ENCODE measurements at regions of chr6 and their contacts with region 1.

Region 1: DNA sequence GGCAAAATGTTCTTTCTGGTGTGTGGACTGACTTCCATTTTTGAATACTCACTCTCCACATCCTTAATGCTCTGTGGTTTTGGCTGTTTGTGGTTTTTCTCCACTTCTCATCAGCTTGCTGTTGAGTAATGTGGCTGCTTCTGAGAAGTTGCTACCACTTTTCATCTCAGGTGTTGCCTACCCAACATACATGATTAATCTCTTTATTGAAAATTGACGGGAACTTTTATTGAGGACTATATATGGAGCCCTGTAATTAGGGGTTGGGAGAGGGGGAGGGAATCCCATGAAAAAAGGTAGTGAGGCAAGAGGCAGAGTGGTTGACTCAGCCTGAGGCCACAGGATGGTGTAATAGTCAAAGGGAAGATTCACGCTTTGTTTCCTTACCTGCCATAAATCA is 17.6 kb downstream of the IL22RA2 start:
- DNase-seq: peak; percentile 59 to 77 (median 70)
- H3K4me3 ChIP-seq: peak overlapping the region in 1 of 2 donors; percentile 15
- H3K4me3 Mint-ChIP-seq: peak overlapping the region in 7 of 8 donors; percentile 6 to 85 (median 60)
- H3K27ac ChIP-seq: no peak overlapping the region
- H3K27ac Mint-ChIP-seq: peak overlapping the region in 6 of 7 donors; percentile 0 to 82 (median 53)
- H3K4me1 ChIP-seq: peaks cover 19% of the 10 kb centered on the region
- H3K4me1 Mint-ChIP-seq: peaks cover 11 to 38% (median 18%) of the 10 kb centered on the region in 4 donors
- H3K27me3 ChIP-seq: no peaks in the 10 kb centered on the region
- H3K27me3 Mint-ChIP-seq: peaks cover 0 to 3% of the 10 kb centered on the region in 2 donors

Region 2: DNA sequence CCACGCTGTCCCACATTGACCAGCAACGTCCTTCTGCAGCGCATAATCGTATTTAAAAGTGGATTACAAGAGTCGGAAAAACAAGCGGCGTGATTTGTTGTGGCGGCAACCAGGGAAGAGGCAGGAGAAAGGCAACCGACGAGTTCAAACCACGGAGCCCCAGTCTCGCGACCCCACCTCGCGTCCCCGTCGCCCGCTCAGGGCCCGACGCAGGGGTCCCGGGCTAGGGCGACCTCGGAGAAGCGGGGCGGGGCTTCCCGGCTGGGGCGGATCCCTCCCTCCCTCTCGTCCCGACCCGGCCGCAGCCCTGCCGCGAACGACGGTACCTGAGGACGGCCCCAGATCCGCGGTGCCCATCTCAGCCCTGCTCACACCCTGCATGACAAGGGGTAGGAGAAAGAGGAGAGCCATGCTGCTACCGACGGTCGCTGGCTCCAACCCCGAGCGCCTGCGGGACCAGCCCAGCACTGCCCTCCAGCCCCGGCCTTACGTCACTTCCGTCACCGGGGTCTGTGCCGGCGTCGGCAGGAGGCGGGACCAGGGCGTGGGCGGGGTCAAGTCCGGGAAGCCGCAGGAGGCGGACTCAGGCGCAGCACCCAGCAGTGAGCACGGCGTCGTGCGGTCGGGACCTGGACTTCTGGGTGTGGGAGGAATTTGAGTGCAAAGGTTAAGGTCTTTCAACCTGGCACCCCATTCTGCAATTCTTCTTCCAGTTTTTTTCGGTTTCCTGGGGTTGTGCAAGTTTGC is 63.3 kb after region 1 on chr6 and contains the start of gene IFNGR1:
- CTCF ChIA-PET with region 1: no interaction called
- POLR2A ChIA-PET with region 1: no interaction called
- intact Hi-C with region 1: loop called (anchors 5 kb)
- DNase-seq: peak; percentile 93 to 94 (median 94)
- H3K4me3 ChIP-seq: peak within 1 kb of the TSS; percentile 86 to 87
- H3K4me3 Mint-ChIP-seq: peak within 1 kb of the TSS; percentile 93 to 100 (median 97)
- H3K27ac ChIP-seq: peak within 1 kb of the TSS; percentile 96
- H3K27ac Mint-ChIP-seq: peak within 1 kb of the TSS; percentile 93 to 100 (median 98)
- H3K4me1 ChIP-seq: peaks cover 63% of the 10 kb centered on the region
- H3K4me1 Mint-ChIP-seq: peaks cover 45 to 74% (median 57%) of the 10 kb centered on the region in 4 donors
- H3K27me3 ChIP-seq: no peaks in the 10 kb centered on the region
- H3K27me3 Mint-ChIP-seq: peaks cover 0 to 1% of the 10 kb centered on the region in 2 donors
- total RNA-seq, gene IFNGR1: 38.3 to 38.8 TPM

Measured in CD4-positive, alpha-beta memory T cell (primary cell).